Transverse colon (tissue), 4 donors: ENCODE measurements at regions of chr10 and their contacts with region 1.

Region 1: DNA sequence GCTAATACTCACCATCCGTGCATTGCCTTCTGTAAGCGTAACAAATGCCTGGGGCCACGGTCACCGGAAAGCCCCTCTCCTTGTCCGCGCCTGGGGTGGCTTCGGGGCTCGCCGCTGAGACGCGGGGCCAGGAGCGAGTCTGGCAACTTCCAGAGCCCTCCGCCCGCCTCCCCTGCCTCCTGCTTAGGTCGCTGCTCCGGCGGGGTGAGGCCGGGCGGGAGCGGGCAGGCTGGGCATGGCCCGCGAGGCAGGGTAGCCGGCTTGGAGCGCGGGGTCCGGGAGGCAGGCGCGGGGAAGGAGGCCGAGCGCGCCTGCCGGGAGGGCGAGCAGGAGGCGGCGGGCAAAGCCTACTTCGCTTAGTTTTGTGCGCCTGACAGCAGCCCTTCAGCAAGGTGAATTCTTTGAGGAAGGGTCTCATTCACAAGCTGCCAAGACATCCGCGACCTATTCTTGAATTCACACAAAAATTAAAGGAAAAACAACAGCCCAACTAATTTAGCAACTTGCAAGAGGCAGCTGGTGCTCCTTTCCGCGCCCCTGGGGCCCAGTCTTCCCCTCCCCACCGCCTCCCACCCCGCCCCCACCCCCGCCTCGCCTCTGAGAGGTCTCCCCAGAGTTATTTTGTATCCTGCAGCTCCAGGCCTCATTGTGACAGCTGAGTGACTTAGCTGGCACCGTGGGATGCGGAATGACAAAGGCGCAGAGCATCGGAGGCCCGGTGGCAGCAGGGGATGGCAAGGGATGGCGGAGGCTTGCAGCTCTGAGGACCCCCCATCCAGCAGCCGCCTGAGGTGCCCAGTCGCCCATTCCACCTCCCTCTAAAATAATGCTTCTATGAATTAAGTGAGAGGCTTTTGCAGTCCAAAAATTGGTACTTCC is 12.8 kb upstream of the KAT6B start:
- DNase-seq: no peak
- H3K4me3 ChIP-seq: no peak overlapping the region
- H3K27ac ChIP-seq: no peak overlapping the region
- H3K4me1 ChIP-seq: no peaks in the 10 kb centered on the region
- H3K27me3 ChIP-seq: no peaks in the 10 kb centered on the region
- CTCF ChIP-seq: no peak
- EP300 ChIP-seq: no peak
- POLR2A ChIP-seq: no peak

Region 2: GRCh38 chr10:74406006-74406405 is 407.6 kb before region 1 on chr10:
- in situ Hi-C with region 1: no loop called
- intact Hi-C with region 1: no loop called
- DNase-seq: no peak
- H3K4me3 ChIP-seq: no peak overlapping the region
- H3K27ac ChIP-seq: no peak overlapping the region
- H3K4me1 ChIP-seq: no peaks in the 10 kb centered on the region
- H3K27me3 ChIP-seq: no peaks in the 10 kb centered on the region
- CTCF ChIP-seq: no peak
- EP300 ChIP-seq: no peak
- POLR2A ChIP-seq: no peak

Region 3: GRCh38 chr10:74778436-74779094 is 35.1 kb before region 1 on chr10:
- in situ Hi-C with region 1: no loop called
- intact Hi-C with region 1: loop called (anchors 2 kb)
- DNase-seq: no peak
- H3K4me3 ChIP-seq: no peak overlapping the region
- H3K27ac ChIP-seq: no peak overlapping the region
- H3K4me1 ChIP-seq: no peaks in the 10 kb centered on the region
- H3K27me3 ChIP-seq: no peaks in the 10 kb centered on the region
- CTCF ChIP-seq: no peak
- EP300 ChIP-seq: no peak
- POLR2A ChIP-seq: no peak

Region 4: DNA sequence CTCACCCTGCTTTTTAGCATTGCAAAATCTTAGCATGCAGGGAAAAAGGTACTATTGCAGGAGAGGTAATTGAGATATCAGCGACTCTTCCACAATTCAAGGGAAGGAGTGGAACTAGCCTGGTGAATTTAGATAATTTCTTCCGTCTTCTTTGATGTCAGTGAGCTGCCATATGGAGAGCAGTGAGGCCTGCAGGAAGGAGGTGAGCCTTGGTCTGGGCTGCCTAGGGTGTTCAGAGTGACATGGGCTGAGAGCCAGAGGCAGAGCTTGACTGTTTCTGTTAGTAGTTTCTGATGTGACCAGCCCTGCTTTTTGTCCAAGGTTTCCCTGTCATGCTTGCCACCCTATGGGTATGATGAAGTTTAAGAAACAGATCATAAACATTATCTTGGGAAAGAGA is 41.4 kb after region 1 on chr10:
- in situ Hi-C with region 1: no loop called
- intact Hi-C with region 1: no loop called
- DNase-seq: peak; percentile 41
- H3K4me3 ChIP-seq: no peak overlapping the region
- H3K27ac ChIP-seq: peak overlapping the region in 3 of 4 donors; percentile 41 to 56 (median 42)
- H3K4me1 ChIP-seq: peaks cover 8 to 44% (median 17%) of the 10 kb centered on the region in 4 donors
- H3K27me3 ChIP-seq: no peaks in the 10 kb centered on the region
- CTCF ChIP-seq: no peak
- EP300 ChIP-seq: no peak
- POLR2A ChIP-seq: no peak